HepG2 (cell line): ENCODE measurements at regions of chr3 and their contacts with region 1.

Region 1: GRCh38 chr3:197590313-197590962 is 34.7 kb upstream of the BDH1 start:
- DNase-seq: peak; percentile 97
- ATAC-seq: peak; percentile 99
- H3K4me3 ChIP-seq: peak overlapping the region in 2 of 3 experiments; percentile 19 to 57; a peak in 4 of 6 replicates
- H3K27ac ChIP-seq: peak overlapping the region; percentile 97
- H3K4me1 ChIP-seq: peaks cover 96% of the 10 kb centered on the region
- H3K27me3 ChIP-seq: no peaks in the 10 kb centered on the region
- CTCF ChIP-seq: peak; percentile 45
- EP300 ChIP-seq: peak in 1 of 2 experiments; percentile 95; a peak in 2 of 4 replicates
- POLR2A ChIP-seq: peak; percentile 71 to 78; a peak in 3 of 4 replicates
- RAD21 ChIP-seq: peak; percentile 59; the same call in 1 of the 2 replicates

Region 2: GRCh38 chr3:197520311-197521276 is 69.8 kb before region 1 on chr3:
- CTCF ChIA-PET with region 1: no interaction called
- POLR2A ChIA-PET with region 1: interaction called, 12 read pairs
- in situ Hi-C with region 1: no loop called
- intact Hi-C with region 1: no loop called
- DNase-seq: peak; percentile 96
- ATAC-seq: peak; percentile 90
- H3K4me3 ChIP-seq: peak overlapping the region; percentile 41 to 65 (median 50)
- H3K27ac ChIP-seq: peak overlapping the region; percentile 74
- H3K4me1 ChIP-seq: peaks cover 68% of the 10 kb centered on the region
- H3K27me3 ChIP-seq: no peaks in the 10 kb centered on the region
- CTCF ChIP-seq: peak; percentile 25; the same call in 1 of the 2 replicates
- EP300 ChIP-seq: peak in 1 of 2 experiments; percentile 23; a peak in 1 of 4 replicates
- POLR2A ChIP-seq: peak; percentile 86 to 89
- RAD21 ChIP-seq: no peak

Region 3: DNA sequence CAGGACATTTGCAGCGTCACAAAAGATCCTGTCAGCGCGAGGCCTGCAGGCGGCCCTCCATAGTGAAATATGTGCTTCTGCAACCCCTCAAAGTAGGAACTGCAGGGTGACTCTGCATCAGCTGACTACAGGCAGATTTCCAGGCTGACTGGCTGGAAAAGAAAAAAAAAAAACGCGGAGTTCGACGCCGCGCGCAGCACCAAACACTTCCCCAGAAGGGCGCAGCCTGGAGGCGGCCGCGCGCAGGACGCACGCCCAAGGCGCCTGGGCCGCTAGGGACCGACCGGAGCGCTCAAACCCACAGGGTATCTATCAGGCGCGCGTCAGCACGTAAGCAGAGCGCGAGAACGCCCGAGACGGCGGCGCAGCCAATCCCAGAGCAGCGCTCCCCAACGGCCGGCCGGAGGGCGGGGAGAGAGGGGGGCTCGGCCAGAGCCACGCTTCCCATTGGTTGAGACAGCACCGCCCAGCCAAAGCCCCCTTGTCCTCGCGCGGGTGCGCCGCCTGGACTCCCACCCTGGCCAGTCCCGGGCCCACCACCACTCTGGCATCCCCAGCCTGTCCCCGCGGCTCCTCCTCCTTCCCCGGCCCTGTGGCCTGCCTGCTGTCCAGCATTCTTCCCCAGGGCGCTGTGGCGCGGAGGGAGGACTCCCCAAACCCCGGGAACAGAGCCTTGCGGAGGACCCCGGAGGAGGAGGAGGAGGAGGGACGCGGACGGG is 35.7 kb before region 1 on chr3:
- CTCF ChIA-PET with region 1: no interaction called
- POLR2A ChIA-PET with region 1: interaction called, 11 read pairs
- in situ Hi-C with region 1: no loop called
- intact Hi-C with region 1: loop called (anchors 5 kb)
- DNase-seq: no peak
- ATAC-seq: peak; percentile 7; the same call in 2 of the 3 replicates
- H3K4me3 ChIP-seq: no peak overlapping the region
- H3K27ac ChIP-seq: no peak overlapping the region
- H3K4me1 ChIP-seq: peaks cover 25% of the 10 kb centered on the region
- H3K27me3 ChIP-seq: no peaks in the 10 kb centered on the region
- CTCF ChIP-seq: no peak
- EP300 ChIP-seq: no peak
- POLR2A ChIP-seq: no peak
- RAD21 ChIP-seq: no peak

Region 4: DNA sequence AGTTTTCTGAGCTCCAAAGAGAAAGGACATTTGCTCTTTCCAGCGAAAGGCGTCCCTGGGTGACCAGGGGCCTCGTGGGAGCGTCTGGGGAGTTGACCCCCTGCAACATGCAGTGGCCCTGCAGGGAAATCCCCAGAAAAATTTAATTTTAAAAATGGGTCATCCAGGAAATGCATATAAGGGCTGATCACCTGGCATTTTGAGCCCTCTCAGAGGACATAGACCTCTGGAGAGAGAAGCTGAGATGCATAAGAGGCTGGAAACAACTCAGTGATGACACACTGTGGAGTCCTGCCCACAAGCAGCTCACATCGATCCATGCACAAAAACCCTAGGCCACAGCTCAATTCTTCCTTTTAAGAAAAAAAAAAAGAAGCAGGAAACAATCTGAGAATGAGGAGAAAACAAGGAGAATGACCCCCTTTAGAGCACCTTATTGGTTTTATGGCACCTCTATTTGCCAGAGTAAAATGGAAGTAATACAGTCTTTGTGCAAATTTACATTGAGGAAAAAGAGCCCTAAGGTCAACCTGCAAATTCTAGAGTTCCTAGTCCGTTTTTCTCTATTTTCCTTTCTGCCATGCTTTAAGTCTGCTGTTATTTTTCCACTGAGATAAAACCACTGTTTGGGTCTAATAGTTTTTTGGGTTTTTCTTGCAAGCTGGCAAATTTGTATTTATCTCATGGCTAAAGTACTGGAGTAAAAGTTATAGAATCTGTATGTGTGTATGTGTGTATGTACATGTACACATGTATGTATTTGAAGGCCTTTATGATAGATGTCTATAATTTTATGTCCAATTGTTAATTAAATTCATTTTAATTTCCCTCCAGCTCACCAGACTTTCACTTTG is 27.8 kb before region 1 on chr3:
- CTCF ChIA-PET with region 1: no interaction called
- POLR2A ChIA-PET with region 1: interaction called, 12 read pairs
- in situ Hi-C with region 1: no loop called
- intact Hi-C with region 1: no loop called
- DNase-seq: no peak
- ATAC-seq: peak; percentile 48
- H3K4me3 ChIP-seq: no peak overlapping the region
- H3K27ac ChIP-seq: peak overlapping the region; percentile 40
- H3K4me1 ChIP-seq: peaks cover 65% of the 10 kb centered on the region
- H3K27me3 ChIP-seq: no peaks in the 10 kb centered on the region
- CTCF ChIP-seq: no peak
- EP300 ChIP-seq: 0 out of 4 replicates have a peak, but pooled peaks of 1 of the 2 experiments have one; percentile 23
- POLR2A ChIP-seq: no peak
- RAD21 ChIP-seq: no peak

Region 5: DNA sequence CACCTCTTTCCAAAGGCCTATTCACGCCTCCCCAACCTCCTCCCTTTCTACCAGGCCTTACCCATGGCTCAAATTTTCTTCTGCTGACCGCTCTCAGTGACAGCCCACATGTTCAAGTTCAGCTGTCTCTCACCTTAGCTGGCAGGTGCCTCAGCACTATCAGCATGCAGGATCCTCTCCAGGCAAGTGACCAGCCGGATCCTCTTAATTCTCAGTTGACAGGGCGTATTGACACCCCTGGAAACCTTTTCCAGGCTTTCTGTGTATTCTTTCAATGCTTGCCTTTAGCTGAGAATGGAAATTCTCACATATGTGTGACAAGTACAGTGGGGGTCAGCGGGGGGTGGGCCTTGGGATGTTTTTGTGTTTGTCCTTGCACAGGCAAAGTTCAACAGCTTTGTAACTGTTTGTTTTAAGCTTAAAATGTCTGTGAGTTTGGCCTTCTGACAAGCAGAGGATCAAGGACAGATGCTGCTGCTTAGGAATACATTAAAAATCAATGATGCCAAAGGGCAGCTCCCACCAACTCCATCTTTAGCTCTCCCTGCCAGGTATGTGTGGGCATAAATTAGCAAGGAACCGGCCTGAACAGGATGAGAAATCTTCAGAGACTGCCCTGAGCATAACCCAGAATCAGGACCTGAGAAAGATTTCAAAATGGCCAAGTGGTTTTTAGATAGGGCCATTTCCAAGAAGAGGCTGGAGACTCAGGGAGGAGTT is 17.2 kb before region 1 on chr3:
- CTCF ChIA-PET with region 1: no interaction called
- POLR2A ChIA-PET with region 1: interaction called, 90 read pairs
- in situ Hi-C with region 1: no loop called
- intact Hi-C with region 1: loop called (anchors 2 kb)
- DNase-seq: peak; percentile 94
- ATAC-seq: peak; percentile 89
- H3K4me3 ChIP-seq: peak overlapping the region; percentile 58 to 69 (median 64)
- H3K27ac ChIP-seq: peak overlapping the region; percentile 84
- H3K4me1 ChIP-seq: peaks cover 90% of the 10 kb centered on the region
- H3K27me3 ChIP-seq: no peaks in the 10 kb centered on the region
- CTCF ChIP-seq: no peak
- EP300 ChIP-seq: peak; percentile 31 to 96; a peak in 2 of 4 replicates
- POLR2A ChIP-seq: peak in 1 of 2 experiments; percentile 46; a peak in 1 of 4 replicates
- RAD21 ChIP-seq: no peak